Activated B cell treated with CpG ODN at 0.5 μM for 24 hours (primary cell): ENCODE measurements at regions of chr3 and their contacts with region 1.

Region 1: GRCh38 chr3:142226484-142226883 is 1.1 kb upstream of the GK5 start:
- DNase-seq: no peak
- ATAC-seq: no peak
- H3K4me3 Mint-ChIP-seq: peak overlapping the region; percentile 38
- H3K27ac Mint-ChIP-seq: no peak overlapping the region
- H3K4me1 Mint-ChIP-seq: peaks cover 6% of the 10 kb centered on the region
- H3K27me3 Mint-ChIP-seq: no peaks in the 10 kb centered on the region
- CTCF ChIP-seq: no peak

Region 2: DNA sequence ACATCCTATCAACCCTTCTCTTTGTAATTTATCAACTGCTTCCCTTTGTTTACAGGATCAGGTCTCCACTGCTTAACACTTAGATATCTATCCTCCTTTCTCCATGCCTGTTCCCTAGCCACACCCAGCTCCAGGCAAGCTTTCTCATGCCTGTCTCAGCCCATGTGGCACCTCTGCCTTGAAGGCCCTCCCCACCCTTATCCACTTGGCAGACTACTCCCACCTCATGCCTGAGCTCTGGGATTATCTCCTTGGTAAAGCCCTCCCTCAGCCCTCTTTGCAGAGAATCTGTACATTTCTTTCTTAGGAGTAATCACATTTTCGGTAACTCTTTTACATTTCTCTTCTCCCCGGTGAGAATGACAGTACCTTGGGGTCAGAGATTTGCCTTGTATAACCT is 254.1 kb before region 1 on chr3:
- CTCF ChIA-PET with region 1: no interaction called
- POLR2A ChIA-PET with region 1: no interaction called
- intact Hi-C with region 1: loop called (anchors 5 kb)
- DNase-seq: no peak
- ATAC-seq: no peak
- H3K4me3 Mint-ChIP-seq: no peak overlapping the region
- H3K27ac Mint-ChIP-seq: no peak overlapping the region
- H3K4me1 Mint-ChIP-seq: no peaks in the 10 kb centered on the region
- H3K27me3 Mint-ChIP-seq: no peaks in the 10 kb centered on the region
- CTCF ChIP-seq: no peak

Region 3: DNA sequence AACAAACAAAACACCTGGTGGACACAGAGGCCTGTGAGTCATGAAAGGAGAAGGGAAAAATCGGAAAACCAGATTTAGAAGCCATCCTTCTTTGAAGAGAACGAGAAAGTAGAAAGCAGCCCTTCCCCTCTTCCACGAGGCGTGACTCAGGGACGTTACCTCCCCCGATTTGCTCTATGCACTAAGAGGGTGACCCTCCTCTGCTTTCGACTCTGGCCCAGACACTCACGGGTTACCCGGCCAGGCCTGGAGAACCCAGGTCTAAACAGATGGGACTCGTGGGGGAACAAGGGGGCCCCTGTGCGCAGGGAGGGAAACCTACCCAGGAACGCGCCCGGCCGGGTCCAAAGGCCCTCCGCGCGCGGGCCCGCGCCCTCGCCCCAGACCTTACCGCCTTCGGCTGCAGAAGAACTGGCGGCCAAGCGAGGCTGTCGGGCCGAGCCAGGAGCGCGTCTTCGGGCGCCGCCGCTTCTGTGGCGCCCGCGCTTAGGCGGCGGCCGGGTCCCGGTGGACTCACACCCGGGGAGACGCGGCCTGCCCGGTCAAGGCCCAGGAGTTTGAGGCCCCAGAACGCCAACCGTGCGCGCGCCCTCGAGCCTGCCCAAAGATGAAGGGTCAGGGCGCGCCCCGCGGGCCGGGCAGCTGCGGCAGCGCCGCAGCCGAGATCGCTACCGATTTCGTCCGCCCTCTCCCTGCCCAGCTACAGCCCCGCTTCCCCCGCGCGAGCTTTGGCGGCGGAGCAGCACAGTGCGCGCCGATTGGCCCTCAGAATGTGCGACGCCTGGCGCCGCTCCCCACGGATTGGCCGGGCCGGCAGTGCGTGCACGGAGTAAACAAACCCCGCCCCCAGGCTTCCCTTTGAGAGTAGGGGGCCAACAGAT is 77.5 kb before region 1 on chr3 and contains the start of gene TFDP2:
- CTCF ChIA-PET with region 1: no interaction called
- POLR2A ChIA-PET with region 1: no interaction called
- intact Hi-C with region 1: loop called (anchors 2 kb)
- DNase-seq: peak; percentile 78
- ATAC-seq: peak; percentile 99
- H3K4me3 Mint-ChIP-seq: peak within 1 kb of the TSS; percentile 86
- H3K27ac Mint-ChIP-seq: peak within 1 kb of the TSS; percentile 72
- H3K4me1 Mint-ChIP-seq: peaks cover 14% of the 10 kb centered on the region
- H3K27me3 Mint-ChIP-seq: no peaks in the 10 kb centered on the region
- CTCF ChIP-seq: no peak
- total RNA-seq, gene TFDP2: 20.0 and 23.1 TPM in 2 replicates